ENCODE measurements at regions of chr2 and their contacts with region 1.

Region 1: DNA sequence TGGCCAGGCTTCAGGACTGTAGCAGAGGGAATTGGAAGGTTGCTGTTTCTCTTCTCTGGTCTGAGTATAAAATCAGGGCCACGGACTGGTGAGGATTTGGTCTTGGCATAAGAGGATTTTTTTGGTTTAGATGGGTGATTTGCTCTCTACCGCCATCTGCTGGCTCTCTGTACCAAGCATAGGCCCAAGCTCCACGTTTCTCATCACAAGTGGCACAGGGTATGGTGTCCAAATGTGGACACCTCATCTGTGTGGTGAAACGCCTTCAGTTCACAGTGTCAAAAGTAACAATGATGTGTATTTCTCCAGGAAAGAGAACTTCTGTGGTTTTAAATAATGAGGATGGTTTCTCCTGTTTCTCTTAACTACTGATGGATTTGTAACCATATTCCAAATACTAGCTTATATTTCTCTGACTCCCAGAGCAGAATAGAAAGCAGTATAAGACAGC is 115.1 kb downstream of the EML6 start:
- DNase-seq: peak; percentile 7
- H3K4me3 ChIP-seq: no peak overlapping the region
- H3K27me3 ChIP-seq: peaks cover 2% of the 10 kb centered on the region
- CTCF ChIP-seq: peak; percentile 95

Region 2: GRCh38 chr2:53911434-53912189 is 927.0 kb before region 1 on chr2:
- CTCF ChIA-PET with region 1: no interaction called
- POLR2A ChIA-PET with region 1: no interaction called
- DNase-seq: no peak
- H3K4me3 ChIP-seq: no peak overlapping the region
- H3K27me3 ChIP-seq: no peaks in the 10 kb centered on the region
- CTCF ChIP-seq: no peak

Region 3: GRCh38 chr2:54106631-54107454 is 731.8 kb before region 1 on chr2:
- CTCF ChIA-PET with region 1: interaction called, 18 read pairs
- POLR2A ChIA-PET with region 1: no interaction called
- DNase-seq: no peak
- H3K4me3 ChIP-seq: no peak overlapping the region
- H3K27me3 ChIP-seq: no peaks in the 10 kb centered on the region
- CTCF ChIP-seq: peak; percentile 69

Region 4: DNA sequence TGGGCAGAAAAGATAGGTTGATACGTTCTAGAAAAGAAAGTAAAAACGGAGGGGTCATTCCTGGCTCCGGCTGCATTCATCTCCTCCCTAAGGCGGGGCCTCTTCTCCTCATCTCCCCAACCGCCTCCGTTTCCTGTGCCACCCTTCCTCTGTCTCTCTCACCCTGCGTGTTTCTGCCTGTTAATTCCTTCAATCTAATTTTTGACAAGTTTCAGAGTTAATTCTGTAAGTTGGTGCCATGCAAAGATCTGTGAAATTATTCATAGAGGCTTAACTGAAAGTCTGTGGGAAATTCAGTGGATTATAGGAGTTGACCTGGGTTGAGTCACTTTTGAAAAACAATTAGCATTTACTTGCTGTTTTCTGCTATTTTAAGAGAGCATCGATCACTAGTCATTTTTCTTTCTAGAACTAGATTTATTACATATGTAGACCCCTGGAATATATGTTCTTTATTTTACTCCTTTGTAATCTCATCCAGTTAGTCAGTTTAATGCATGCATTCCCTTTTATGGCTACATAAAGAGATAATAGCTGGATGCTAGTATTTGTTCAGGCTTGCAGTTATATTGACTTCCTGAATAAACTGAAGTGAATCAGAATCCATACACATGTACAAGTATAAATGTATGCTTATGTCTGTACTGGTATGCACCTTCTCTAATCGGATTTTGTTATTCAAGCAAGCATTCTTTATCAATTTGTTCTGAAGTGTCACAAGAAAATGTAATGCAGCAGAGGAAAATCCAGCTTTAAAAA is 24.0 kb before region 1 on chr2:
- CTCF ChIA-PET with region 1: interaction called, 10 read pairs
- POLR2A ChIA-PET with region 1: no interaction called
- DNase-seq: no peak
- H3K4me3 ChIP-seq: no peak overlapping the region
- H3K27me3 ChIP-seq: peaks cover 3% of the 10 kb centered on the region; the same call in 1 of the 2 replicates
- CTCF ChIP-seq: no peak

Region 5: GRCh38 chr2:54859997-54860686 is 21.5 kb after region 1 on chr2:
- CTCF ChIA-PET with region 1: interaction called, 12 read pairs
- POLR2A ChIA-PET with region 1: no interaction called
- DNase-seq: peak; percentile 65
- H3K4me3 ChIP-seq: no peak overlapping the region
- H3K27me3 ChIP-seq: no peaks in the 10 kb centered on the region
- CTCF ChIP-seq: no peak

Region 6: DNA sequence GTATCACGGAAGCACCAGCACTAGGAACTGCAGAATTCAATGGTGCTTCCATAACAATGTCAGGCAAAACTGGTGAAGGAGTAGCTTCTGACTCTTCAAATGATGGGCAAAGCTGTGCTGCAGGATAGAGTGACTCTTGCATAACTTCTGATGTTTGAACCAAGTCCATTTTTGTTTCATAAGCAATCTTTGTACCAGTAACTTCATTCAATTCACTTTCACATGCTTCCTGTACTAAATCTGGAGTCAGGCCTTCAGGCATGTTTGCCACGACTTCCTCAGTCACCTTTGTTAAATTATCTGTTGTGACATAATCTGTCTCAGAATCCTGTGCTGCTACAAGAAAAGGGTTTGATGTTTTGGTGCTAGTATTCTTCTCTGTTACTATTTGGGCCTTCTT is 187.6 kb after region 1 on chr2:
- CTCF ChIA-PET with region 1: no interaction called
- POLR2A ChIA-PET with region 1: no interaction called
- DNase-seq: no peak
- H3K4me3 ChIP-seq: no peak overlapping the region
- H3K27me3 ChIP-seq: no peaks in the 10 kb centered on the region
- CTCF ChIP-seq: no peak

Measured in BJ (cell line).